ENCODE measurements at regions of chr3 and their contacts with region 1.

Region 1: DNA sequence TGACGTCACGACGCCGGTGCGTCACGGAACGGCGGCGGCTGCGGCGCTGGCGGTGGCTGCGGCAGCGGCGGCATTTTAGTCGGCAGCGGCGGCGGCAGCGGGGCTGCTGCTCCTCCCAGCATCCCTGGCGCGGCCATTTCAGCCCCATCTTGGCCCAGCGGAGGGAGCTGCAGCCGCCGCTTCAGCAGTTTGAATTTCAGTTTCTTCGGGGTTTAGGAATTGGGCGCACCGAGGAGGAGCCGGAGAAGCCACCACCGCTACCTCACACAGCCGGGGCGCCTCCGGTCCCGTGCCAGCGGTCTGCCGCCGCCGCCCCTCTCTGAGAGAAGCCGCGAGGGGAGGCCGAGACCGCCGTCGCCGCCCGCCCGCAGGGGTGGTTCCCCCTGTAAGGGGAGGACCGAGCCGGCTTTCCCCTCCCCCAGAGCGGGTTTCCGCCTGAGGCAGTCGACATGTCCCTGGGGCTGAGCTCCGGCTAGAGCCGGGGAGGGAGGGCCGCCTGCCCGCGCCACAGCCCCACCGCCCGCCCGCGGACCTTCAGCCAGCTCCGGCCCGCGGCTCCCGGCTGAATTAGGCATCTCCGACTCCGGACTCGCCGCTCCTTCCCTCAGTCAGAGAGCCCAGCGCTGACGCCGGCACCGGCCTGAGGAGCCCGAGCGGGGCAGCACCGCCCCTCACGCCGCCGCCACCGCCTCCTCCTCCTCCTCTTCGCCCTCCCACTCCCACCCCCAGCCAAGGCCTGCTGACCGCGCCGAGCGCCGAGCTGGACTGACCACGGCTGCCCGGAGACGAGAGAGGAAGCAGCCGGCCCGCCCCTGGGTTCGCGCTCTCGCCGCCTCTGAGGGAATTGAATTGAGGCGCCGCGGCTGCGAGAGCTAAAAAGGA is at the start of gene TSC22D2:
- DNase-seq: peak; percentile 95
- H3K4me3 ChIP-seq: peak within 1 kb of the TSS; percentile 51 to 99 (median 80)
- H3K27ac ChIP-seq: peak within 1 kb of the TSS; percentile 100
- H3K4me1 ChIP-seq: peaks cover 14% of the 10 kb centered on the region
- H3K27me3 ChIP-seq: no peaks in the 10 kb centered on the region
- CTCF ChIP-seq: no peak
- POLR2A ChIP-seq: peak; percentile 79
- total RNA-seq, gene TSC22D2: 43.9 and 50.9 TPM in 2 replicates

Region 2: GRCh38 chr3:149969940-149970715 is 438.3 kb before region 1 on chr3:
- CTCF ChIA-PET with region 1: interaction called, 9 read pairs
- POLR2A ChIA-PET with region 1: no interaction called
- dilution Hi-C with region 1: no loop called
- intact Hi-C with region 1: loop called (anchors 1 kb)
- DNase-seq: peak; percentile 90
- H3K4me3 ChIP-seq: peak overlapping the region; percentile 65 to 92 (median 88)
- H3K27ac ChIP-seq: peak overlapping the region; percentile 94
- H3K4me1 ChIP-seq: peaks cover 27% of the 10 kb centered on the region
- H3K27me3 ChIP-seq: peaks cover 0 to 3% of the 10 kb centered on the region in 2 experiments
- CTCF ChIP-seq: no peak
- POLR2A ChIP-seq: peak; percentile 30

Region 3: GRCh38 chr3:150253622-150254021 is 154.8 kb before region 1 on chr3:
- CTCF ChIA-PET with region 1: interaction called, 5 read pairs
- POLR2A ChIA-PET with region 1: no interaction called
- dilution Hi-C with region 1: loop called (anchors 25 kb)
- intact Hi-C with region 1: loop called (anchors 1 kb)
- DNase-seq: peak; percentile 57
- H3K4me3 ChIP-seq: no peak overlapping the region
- H3K27ac ChIP-seq: no peak overlapping the region
- H3K4me1 ChIP-seq: peaks cover 32% of the 10 kb centered on the region
- H3K27me3 ChIP-seq: no peaks in the 10 kb centered on the region
- CTCF ChIP-seq: no peak
- POLR2A ChIP-seq: no peak

Region 4: DNA sequence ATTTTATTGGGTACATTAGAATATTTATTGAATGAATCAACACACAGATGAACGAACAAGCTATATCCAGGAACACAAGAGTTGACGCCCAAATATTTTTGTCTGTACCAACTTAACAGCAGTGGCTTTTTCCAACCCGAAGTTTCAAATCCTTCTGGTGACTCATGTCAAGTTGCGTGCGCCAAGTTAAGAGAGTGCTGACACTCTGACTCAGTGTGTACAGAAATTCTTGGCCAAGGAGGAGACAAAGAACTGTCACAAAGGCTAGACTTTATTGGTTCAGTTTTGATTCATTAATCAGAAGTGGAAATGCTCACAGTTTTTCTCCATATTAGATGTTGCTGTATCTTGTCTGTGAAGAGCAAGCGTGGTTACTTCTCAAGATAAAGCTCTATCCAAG is 60.0 kb before region 1 on chr3:
- CTCF ChIA-PET with region 1: no interaction called
- POLR2A ChIA-PET with region 1: no interaction called
- dilution Hi-C with region 1: no loop called
- intact Hi-C with region 1: loop called (anchors 2 kb)
- DNase-seq: peak; percentile 81
- H3K4me3 ChIP-seq: no peak overlapping the region
- H3K27ac ChIP-seq: peak overlapping the region; percentile 67
- H3K4me1 ChIP-seq: peaks cover 30% of the 10 kb centered on the region
- H3K27me3 ChIP-seq: no peaks in the 10 kb centered on the region
- CTCF ChIP-seq: no peak
- POLR2A ChIP-seq: no peak

Region 5: DNA sequence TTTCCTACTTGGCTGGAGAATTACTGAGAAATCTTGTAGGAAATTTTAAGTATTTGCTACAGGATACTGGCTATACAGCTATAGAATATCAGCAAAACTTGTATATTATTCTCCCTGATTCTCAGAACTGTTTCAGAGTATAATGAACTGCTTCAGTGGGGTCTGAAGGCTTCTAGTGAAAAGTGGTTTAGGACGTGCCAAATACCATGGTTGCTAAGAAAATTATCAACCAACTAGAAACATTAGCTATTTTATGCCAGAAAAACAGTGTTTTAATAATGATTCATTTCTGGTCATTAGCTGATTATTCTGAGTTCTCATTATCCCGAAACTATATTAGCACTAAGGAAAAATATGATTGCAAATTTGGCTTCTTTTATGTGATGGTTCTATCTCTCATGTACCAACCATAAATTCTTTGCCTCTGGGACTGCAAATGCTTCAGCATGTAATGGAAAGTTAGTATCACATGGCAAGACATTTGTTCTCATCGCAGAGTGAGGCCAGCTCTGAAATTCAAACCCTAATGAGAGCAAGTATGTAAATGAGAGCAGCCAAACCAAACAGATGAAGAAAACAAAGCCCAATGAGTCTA is 11.4 kb before region 1 on chr3:
- CTCF ChIA-PET with region 1: interaction called, 12 read pairs
- POLR2A ChIA-PET with region 1: no interaction called
- dilution Hi-C with region 1: no loop called
- intact Hi-C with region 1: no loop called
- DNase-seq: no peak
- H3K4me3 ChIP-seq: no peak overlapping the region
- H3K27ac ChIP-seq: no peak overlapping the region
- H3K4me1 ChIP-seq: peaks cover 7% of the 10 kb centered on the region
- H3K27me3 ChIP-seq: no peaks in the 10 kb centered on the region
- CTCF ChIP-seq: no peak
- POLR2A ChIP-seq: no peak

Region 6: DNA sequence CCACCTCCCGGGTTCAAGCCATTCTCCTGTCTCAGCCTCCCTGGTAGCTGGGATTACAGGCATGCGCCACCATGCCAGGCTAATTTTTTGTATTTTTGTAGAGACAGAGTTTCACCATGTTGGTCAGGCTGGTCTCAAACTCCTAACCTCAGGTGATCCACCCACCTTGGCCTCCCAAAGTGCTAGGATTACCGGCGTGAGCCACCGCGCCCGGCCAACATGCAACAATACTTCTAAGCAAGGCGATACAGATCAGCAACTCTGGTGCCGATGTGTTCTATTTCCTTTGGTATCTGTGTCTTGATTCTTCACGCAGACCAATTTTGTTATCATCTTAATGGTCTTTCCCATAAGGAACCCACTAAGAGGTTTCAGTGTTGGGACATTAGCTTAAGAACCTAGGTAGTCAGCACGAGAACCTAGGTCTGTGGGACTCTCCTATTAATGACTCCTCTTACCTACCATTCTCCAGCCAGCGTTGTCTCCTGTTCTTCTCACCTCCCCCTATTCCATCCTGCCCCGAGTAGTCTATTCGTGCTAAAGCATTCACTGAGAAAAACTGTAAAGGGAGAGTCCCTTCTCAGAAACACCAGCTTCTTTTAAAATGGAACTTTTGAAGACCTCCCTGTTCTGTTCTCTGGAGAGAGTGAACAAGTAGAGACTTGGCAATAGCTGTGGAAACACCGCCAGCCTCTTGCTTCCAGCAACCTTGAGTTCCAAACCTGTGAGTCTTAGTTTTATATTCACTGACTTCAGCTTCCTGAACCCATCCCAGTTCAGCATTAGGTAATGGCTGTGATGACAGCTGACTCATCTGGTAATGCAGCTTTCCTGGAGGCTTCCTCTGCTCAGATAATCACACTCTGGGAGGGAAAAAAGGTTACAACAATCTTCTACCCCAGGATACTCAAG is 60.8 kb after region 1 on chr3:
- CTCF ChIA-PET with region 1: interaction called, 7 read pairs
- POLR2A ChIA-PET with region 1: interaction called, 12 read pairs
- dilution Hi-C with region 1: no loop called
- intact Hi-C with region 1: no loop called
- DNase-seq: peak; percentile 88
- H3K4me3 ChIP-seq: peak overlapping the region in 1 of 3 experiments; percentile 15
- H3K27ac ChIP-seq: peak overlapping the region; percentile 83
- H3K4me1 ChIP-seq: peaks cover 28% of the 10 kb centered on the region
- H3K27me3 ChIP-seq: no peaks in the 10 kb centered on the region
- CTCF ChIP-seq: no peak
- POLR2A ChIP-seq: no peak

Region 7: GRCh38 chr3:150603153-150603979 is 194.9 kb after region 1 on chr3 and contains the start of gene SELENOT:
- CTCF ChIA-PET with region 1: no interaction called
- POLR2A ChIA-PET with region 1: no interaction called
- dilution Hi-C with region 1: no loop called
- intact Hi-C with region 1: loop called (anchors 5 kb)
- DNase-seq: peak; percentile 99
- H3K4me3 ChIP-seq: peak within 1 kb of the TSS; percentile 67 to 72 (median 72)
- H3K27ac ChIP-seq: peak within 1 kb of the TSS; percentile 81
- H3K4me1 ChIP-seq: peaks cover 31% of the 10 kb centered on the region
- H3K27me3 ChIP-seq: no peaks in the 10 kb centered on the region
- CTCF ChIP-seq: peak; percentile 14 to 30
- POLR2A ChIP-seq: peak; percentile 98
- total RNA-seq, gene SELENOT: 89.2 and 103 TPM in 2 replicates